Right cardiac atrium (tissue), 5 donors: ENCODE measurements at regions of chr1 and their contacts with region 1.

Region 1: GRCh38 chr1:204806943-204807687 is 63.5 kb upstream of the NFASC start:
- DNase-seq: peak; percentile 83 to 90 (median 90)
- ATAC-seq: peak; percentile 90 to 96
- H3K4me3 ChIP-seq: peak overlapping the region; percentile 12
- H3K27ac ChIP-seq: no peak overlapping the region
- H3K4me1 ChIP-seq: peaks cover 3% of the 10 kb centered on the region
- H3K27me3 ChIP-seq: no peaks in the 10 kb centered on the region

Region 2: GRCh38 chr1:204565617-204566582 is 241.2 kb before region 1 on chr1:
- intact Hi-C with region 1: loop called (anchors 2 to 5 kb)
- DNase-seq: peak in 1 of 3 donors; percentile 24
- ATAC-seq: peak; percentile 72 to 84
- H3K4me3 ChIP-seq: no peak overlapping the region
- H3K27ac ChIP-seq: no peak overlapping the region
- H3K4me1 ChIP-seq: no peaks in the 10 kb centered on the region
- H3K27me3 ChIP-seq: no peaks in the 10 kb centered on the region

Region 3: GRCh38 chr1:204572931-204573891 is 233.9 kb before region 1 on chr1:
- intact Hi-C with region 1: loop called in 2 of 4 experiments (anchors 5 kb)
- DNase-seq: no peak
- ATAC-seq: no peak
- H3K4me3 ChIP-seq: no peak overlapping the region
- H3K27ac ChIP-seq: no peak overlapping the region
- H3K4me1 ChIP-seq: peaks cover 2% of the 10 kb centered on the region
- H3K27me3 ChIP-seq: no peaks in the 10 kb centered on the region

Region 4: GRCh38 chr1:204941421-204942338 is 134.6 kb after region 1 on chr1:
- intact Hi-C with region 1: loop called (anchors 2 to 5 kb)
- DNase-seq: peak; percentile 57 to 83 (median 78)
- ATAC-seq: peak; percentile 69 to 71
- H3K4me3 ChIP-seq: no peak overlapping the region
- H3K27ac ChIP-seq: no peak overlapping the region
- H3K4me1 ChIP-seq: peaks cover 2% of the 10 kb centered on the region
- H3K27me3 ChIP-seq: no peaks in the 10 kb centered on the region

Region 5: DNA sequence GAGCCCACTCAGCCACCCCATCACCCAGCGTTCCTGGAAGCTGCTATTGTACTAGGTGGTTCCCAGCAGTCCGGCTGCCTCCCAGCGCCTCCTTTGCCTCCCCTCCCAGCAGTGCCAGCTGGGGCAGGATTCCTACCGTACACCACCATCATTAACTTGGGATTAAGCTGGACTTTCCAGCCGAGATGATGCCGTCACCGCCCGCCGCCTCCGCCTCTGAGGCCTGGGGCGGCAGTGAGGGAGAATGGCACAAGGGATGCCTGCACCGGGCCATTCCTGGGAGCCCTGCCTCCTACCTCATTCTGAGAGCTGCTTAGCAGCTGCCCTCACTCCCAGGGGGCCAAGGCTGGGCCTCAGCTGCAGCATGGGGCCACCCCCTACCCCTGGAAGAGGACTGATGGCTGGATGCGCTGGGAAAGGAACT is 249.1 kb after region 1 on chr1:
- intact Hi-C with region 1: loop called in 1 of 4 experiments (anchors 10 kb)
- DNase-seq: no peak
- ATAC-seq: no peak
- H3K4me3 ChIP-seq: no peak overlapping the region
- H3K27ac ChIP-seq: no peak overlapping the region
- H3K4me1 ChIP-seq: no peaks in the 10 kb centered on the region
- H3K27me3 ChIP-seq: no peaks in the 10 kb centered on the region